ENCODE measurements at regions of chr2 and their contacts with region 1.

Region 1: DNA sequence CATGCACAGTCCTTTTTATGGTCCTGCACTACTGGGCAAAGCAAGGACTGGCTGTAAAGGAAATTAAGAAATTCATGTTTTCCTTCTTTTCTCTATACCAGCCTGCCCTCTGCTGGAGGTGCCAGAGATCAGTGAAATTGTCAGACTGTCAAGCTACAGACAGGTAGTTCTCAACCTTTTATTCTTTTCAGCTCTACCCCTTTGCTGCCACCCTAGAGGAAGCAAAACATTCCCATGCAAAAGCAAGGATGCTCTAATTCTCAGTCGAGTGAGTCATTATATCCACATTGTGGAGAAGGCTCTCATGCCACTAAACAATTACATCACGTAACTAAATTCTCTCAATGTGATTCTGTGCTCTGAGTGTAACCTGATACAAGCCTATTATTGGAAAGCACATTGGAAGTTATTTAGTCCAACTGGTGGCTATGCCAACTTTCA is 25.0 kb upstream of the RAPGEF4 start:
- DNase-seq: peak; percentile 96
- ATAC-seq: peak; percentile 100
- H3K4me3 ChIP-seq: no peak overlapping the region
- H3K27ac ChIP-seq: peak overlapping the region; percentile 63
- H3K4me1 ChIP-seq: peaks cover 20% of the 10 kb centered on the region
- H3K27me3 ChIP-seq: no peaks in the 10 kb centered on the region
- CTCF ChIP-seq: peak; percentile 95

Region 2: DNA sequence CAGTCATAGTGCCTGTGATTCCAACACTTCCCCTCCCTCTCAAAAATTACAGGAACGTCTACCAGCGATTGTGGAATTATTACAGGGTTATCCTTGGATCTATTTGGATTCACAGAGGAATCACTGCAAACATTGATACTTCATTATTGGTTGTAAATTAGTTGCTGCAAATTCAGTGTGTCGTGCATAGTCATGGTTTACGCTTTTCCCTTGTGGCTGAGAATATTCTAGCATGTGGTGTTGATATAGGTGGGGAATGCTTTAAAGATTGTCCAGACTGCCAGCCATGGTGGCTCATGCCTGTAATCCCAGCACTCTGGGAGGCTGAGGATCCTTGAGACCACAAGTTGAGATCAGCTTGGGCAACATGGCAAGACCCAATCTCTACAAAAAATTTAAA is 203.4 kb before region 1 on chr2:
- CTCF ChIA-PET with region 1: no interaction called
- POLR2A ChIA-PET with region 1: no interaction called
- intact Hi-C with region 1: loop called (anchors 10 kb)
- DNase-seq: no peak
- ATAC-seq: no peak
- H3K4me3 ChIP-seq: no peak overlapping the region
- H3K27ac ChIP-seq: no peak overlapping the region
- H3K4me1 ChIP-seq: no peaks in the 10 kb centered on the region
- H3K27me3 ChIP-seq: no peaks in the 10 kb centered on the region
- CTCF ChIP-seq: no peak

Region 3: GRCh38 chr2:172588931-172589330 is 121.7 kb before region 1 on chr2:
- CTCF ChIA-PET with region 1: interaction called, 8 read pairs
- POLR2A ChIA-PET with region 1: no interaction called
- intact Hi-C with region 1: loop called (anchors 1 kb)
- DNase-seq: peak; percentile 54
- ATAC-seq: peak; percentile 64
- H3K4me3 ChIP-seq: no peak overlapping the region
- H3K27ac ChIP-seq: peak overlapping the region; percentile 34; the same call in 1 of the 2 replicates
- H3K4me1 ChIP-seq: peaks cover 13% of the 10 kb centered on the region
- H3K27me3 ChIP-seq: no peaks in the 10 kb centered on the region
- CTCF ChIP-seq: no peak

Region 4: DNA sequence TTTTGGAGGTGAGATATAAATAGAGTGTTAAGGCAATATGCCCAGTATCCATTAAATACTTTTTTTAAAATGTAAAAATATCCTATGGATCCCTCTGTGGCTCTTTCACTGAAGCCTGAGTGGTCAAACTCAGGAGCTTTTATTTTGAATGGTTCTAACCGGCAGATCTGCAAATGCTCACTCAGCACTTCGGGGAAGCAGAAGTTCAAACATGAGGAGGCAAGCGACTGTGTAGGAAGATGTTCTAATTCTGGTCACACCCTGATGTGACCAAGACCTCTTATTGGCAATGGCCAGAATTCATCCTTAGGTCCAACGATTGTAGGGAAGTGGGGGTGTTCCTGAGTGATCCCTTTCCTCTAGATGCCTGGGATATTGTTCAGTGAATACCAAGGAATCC is 812.9 kb after region 1 on chr2:
- CTCF ChIA-PET with region 1: no interaction called
- POLR2A ChIA-PET with region 1: no interaction called
- intact Hi-C with region 1: no loop called
- DNase-seq: no peak
- ATAC-seq: no peak
- H3K4me3 ChIP-seq: no peak overlapping the region
- H3K27ac ChIP-seq: no peak overlapping the region
- H3K4me1 ChIP-seq: peaks cover 23% of the 10 kb centered on the region
- H3K27me3 ChIP-seq: no peaks in the 10 kb centered on the region
- CTCF ChIP-seq: no peak

Measured in PC-3 (cell line).